Right lobe of liver (tissue), 6 donors: ENCODE measurements at regions of chr16 and their contacts with region 1.

Region 1: DNA sequence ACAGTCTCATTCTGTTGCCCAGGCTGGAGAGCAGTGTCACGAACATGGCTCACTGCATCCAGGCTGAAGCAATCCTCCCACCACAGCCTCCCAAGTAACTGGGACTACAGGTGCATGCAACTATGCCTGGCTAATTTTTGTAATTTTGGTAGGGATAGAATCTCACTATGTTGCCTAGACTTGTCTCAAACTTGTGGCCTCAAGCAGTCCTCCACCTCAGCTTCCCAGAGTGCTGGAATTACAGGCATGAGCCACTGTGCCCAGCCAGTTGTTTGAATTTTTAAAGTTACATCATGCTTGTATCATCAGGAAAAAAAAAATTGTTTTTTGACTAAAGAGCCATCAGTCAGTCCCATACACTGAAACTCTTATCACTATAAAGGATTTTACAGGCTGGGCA is 17.1 kb upstream of the VPS4A start:
- DNase-seq: no peak
- ATAC-seq: no peak
- H3K4me3 ChIP-seq: no peak overlapping the region
- H3K27ac ChIP-seq: no peak overlapping the region
- H3K4me1 ChIP-seq: no peaks in the 10 kb centered on the region
- H3K27me3 ChIP-seq: no peaks in the 10 kb centered on the region
- CTCF ChIP-seq: no peak
- POLR2A ChIP-seq: no peak

Region 2: GRCh38 chr16:69150146-69150865 is 143.7 kb before region 1 on chr16:
- intact Hi-C with region 1: loop called in 1 of 2 experiments (anchors 10 kb)
- DNase-seq: peak in 1 of 3 donors; percentile 51
- ATAC-seq: peak; percentile 84 to 93 (median 90)
- H3K4me3 ChIP-seq: no peak overlapping the region
- H3K27ac ChIP-seq: no peak overlapping the region
- H3K4me1 ChIP-seq: no peaks in the 10 kb centered on the region
- H3K27me3 ChIP-seq: no peaks in the 10 kb centered on the region
- CTCF ChIP-seq: peak; percentile 75 to 79 (median 78)
- POLR2A ChIP-seq: no peak

Region 3: DNA sequence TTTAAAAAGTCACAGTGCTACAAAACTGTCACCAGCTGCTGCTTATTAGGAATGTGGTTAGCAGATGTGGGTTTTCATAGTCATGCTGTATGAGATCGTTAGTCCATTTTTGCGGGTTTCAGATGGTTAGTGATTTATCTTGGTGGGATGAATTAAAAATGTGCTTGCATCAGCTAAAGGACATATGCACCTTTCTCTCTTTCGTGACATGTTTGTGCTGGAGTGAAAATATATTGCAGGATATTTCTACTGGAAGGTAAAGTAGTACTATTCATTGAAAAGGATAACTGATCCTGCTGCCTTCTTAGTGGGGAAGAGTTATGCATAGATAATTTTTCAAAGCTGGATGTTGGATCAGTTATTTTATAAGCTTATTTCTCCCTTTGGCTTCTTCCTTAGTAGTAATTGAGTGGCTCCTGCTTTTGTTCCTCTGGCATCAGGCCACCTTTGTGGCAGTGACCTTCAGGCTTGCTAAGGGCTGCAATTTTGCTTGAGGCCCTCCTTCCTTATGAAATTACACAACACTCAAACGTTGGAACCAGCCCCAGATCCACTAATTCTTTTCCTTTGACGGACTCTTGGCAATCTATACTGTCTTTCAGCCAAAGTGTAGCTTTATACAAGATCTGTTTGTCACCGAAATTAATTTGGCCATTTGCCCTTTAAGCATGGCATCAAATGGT is 114.6 kb before region 1 on chr16:
- intact Hi-C with region 1: loop called in 1 of 2 experiments (anchors 10 kb)
- DNase-seq: peak in 2 of 3 donors; percentile 46 to 62
- ATAC-seq: peak; percentile 66 to 85 (median 75)
- H3K4me3 ChIP-seq: no peak overlapping the region
- H3K27ac ChIP-seq: no peak overlapping the region
- H3K4me1 ChIP-seq: peaks cover 0 to 8% (median 3%) of the 10 kb centered on the region in 4 donors
- H3K27me3 ChIP-seq: no peaks in the 10 kb centered on the region
- CTCF ChIP-seq: no peak
- POLR2A ChIP-seq: no peak